ENCODE measurements at regions of chr5 and their contacts with region 1.

Region 1: DNA sequence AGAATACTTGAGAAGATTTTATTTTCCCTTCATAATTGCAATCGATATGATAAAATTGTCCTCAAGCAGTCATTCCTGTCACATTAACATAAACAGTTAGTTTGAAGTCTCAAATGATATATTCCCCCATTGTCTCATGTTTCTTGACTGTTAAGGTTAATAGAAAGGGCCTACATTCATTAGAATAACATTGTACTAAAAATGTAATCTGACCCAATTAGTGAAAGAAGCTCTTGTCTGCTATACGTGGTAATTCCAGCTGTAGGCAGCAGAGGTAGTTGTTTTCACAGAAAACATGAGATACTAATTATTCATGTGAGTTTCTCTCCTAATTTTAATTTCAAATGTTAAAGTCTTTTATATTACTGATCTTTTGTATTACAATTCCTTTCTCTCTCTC is 25.9 kb upstream of the AP3B1 start:
- DNase-seq: no peak

Region 2: DNA sequence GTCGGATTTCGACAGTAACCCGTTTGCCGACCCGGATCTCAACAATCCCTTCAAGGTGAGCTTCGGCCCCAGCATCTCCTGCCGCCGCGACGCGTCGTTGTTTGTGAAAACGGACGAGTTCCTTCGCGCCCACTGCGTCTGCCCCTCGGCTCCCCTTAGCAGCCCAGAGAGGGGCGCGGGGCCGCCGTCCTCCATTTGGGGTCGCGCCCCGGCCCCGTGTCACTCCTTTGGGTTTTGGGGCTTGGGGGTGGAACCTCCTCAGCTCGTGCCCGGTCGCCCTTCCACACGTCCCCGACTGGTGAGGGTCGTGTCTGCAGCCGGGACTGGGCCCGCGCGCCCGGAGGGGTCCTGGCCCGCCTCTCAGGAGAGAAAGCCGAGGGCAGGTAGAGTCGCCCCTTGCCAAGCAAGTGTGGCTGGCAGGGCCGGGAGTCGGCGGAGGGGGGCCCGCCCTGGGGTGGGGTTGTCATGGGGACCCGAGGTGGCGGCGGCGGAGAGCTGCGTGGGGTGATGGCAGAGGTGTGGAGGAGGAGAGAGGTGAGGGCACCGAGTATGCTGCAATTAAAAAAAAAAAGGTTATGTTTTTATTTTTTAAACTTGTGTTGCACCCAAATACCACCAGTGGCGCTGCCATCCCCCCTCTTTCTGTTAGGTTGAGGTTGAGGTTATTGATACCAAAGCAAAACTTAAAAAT is 40.4 kb after region 1 on chr5:
- intact Hi-C with region 1: no loop called
- DNase-seq: peak; percentile 83

Region 3: DNA sequence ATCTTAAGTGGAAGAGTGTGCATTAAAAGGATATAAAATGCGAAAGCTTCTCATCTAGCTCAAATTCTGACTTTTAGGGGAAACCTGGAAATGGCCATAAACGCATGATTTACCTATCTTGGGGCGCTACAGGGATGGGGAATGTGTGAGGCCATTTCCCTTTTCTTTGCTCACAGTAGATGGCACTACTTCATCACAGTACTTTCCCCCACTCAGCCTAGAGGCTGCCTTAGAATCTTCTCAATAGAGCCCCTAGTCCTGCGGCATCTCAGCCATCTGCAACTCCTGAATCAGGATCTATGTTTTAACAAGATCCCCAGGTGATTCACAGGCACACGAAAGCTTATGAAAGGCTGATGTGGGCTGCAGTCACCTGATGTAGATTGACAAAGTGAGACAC is 217.4 kb after region 1 on chr5:
- intact Hi-C with region 1: loop called (anchors 5 kb)
- DNase-seq: no peak

Region 4: DNA sequence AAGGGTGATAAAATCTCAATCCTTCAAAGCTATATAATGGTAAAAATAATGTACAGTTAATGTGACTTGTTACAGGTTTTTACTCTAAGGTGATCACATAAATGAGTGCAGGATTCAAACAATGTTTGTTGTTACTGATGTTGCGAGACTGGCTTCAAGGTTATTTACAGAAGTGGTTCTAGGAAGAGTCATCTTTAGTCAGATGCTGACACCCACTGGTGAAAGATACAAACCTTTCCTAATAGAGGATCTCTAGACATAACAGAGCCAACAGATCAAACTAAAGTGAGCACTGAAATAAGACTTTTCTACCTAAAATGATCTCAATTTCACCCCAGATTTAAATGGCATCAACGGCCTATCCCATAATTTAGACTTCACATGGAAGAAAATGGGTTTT is 644.5 kb after region 1 on chr5:
- intact Hi-C with region 1: loop called (anchors 10 kb)
- DNase-seq: no peak

Measured in cardiac septum (tissue), 1 donor.